Left cardiac atrium (tissue), 4 donors: ENCODE measurements at regions of chr12 and their contacts with region 1.

Region 1: GRCh38 chr12:13289653-13290289 is 93.2 kb downstream of the EMP1 start:
- DNase-seq: peak; percentile 29
- ATAC-seq: peak; percentile 64 to 85

Region 2: DNA sequence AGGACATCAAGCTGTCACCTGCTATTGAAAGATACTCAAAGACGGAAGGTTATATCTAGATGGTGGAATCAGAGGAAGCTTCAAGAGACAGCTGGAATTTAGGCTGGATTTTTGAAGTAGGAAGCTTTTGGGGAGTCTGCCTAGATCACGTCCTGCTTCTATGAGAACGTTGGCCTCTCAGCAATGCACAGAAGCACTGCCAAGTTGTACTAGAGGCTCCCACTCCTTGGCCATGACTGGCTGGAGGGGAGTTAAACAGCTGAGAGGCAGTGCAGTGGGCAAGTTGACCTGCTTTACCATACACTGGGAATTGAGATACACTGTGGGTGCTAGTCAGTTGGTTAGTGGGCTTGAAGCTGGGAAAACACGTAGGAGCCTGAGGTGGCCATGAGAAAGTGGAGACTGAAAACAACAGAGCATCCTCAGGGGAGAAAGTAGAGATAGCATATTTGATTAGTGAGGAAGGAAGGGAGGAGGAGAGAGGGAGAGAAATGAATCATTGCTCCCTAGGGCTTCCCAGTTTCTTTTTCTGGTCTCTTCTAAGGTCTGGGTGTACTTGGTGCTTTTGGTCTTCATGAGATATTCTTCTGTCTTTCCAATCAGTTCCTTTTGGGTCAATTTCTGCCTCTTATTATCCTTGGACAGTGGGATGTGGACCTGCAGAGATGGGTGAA is 17.5 kb after region 1 on chr12:
- intact Hi-C with region 1: no loop called
- DNase-seq: no peak
- ATAC-seq: peak in 1 of 2 donors; percentile 17

Region 3: GRCh38 chr12:13523536-13524307 is 234.0 kb after region 1 on chr12:
- intact Hi-C with region 1: loop called in 1 of 2 experiments (anchors 10 kb)
- DNase-seq: no peak
- ATAC-seq: no peak

Region 4: DNA sequence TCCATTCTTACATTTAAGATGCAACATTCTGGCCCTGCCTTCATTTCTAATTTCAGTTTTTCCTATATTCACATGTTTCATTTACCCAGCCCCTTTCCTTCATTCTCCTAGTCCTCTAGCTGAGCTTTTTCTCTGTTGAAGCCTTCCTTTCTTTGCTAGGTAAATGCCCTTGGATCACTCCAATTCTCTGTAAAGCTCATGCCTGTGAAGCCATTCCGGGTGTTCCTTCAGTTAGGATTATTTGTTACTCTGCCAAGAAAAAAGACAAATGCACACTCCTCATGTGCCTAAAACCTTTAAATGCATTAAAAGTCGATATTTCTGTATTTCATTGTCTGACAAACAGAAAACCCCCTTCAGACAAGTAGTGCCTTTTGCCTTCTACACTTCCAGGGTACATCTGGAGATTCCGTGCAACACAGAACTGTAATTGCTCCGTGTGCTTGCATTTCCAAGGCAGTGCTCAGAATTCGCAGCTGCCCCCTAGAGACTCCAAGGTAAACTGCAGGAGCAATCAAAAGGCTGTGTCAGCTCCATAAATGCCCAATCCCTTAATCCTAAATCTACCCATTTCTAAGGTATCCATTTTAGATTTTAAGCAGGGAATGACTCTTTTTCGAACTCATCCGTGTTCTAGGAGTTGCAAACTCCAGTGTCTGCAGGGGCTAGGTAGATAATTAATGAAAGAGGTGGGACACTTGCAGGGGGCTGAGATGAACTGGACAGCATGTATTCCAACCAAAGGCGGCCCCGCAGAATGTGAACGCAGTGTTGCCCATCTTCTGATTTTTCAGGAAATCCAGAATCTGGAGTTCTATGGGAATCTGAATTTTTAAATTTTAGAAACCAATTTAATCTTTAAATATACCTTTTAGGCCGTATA is 371.5 kb after region 1 on chr12:
- intact Hi-C with region 1: loop called in 1 of 2 experiments (anchors 10 kb)
- DNase-seq: peak; percentile 33
- ATAC-seq: peak; percentile 78 to 82